Heart left ventricle (tissue), 16 donors: ENCODE measurements at regions of chr15 and their contacts with region 1.

Region 1: GRCh38 chr15:36943508-36944361 is 156.6 kb downstream of the MEIS2 start:
- DNase-seq: no peak
- ATAC-seq: no peak
- H3K4me3 ChIP-seq: no peak overlapping the region
- H3K27ac ChIP-seq: no peak overlapping the region
- H3K4me1 ChIP-seq: peaks cover 0 to 51% (median 13%) of the 10 kb centered on the region in 12 donors
- H3K27me3 ChIP-seq: no peaks in the 10 kb centered on the region
- CTCF ChIP-seq: no peak
- POLR2A ChIP-seq: no peak

Region 2: GRCh38 chr15:36970522-36970921 is 26.8 kb after region 1 on chr15:
- intact Hi-C with region 1: loop called in 1 of 10 experiments (anchors 2 kb)
- DNase-seq: no peak
- ATAC-seq: no peak
- H3K4me3 ChIP-seq: no peak overlapping the region
- H3K27ac ChIP-seq: no peak overlapping the region
- H3K4me1 ChIP-seq: peaks cover 0 to 28% (median 7%) of the 10 kb centered on the region in 12 donors
- H3K27me3 ChIP-seq: no peaks in the 10 kb centered on the region
- CTCF ChIP-seq: no peak
- POLR2A ChIP-seq: no peak